ENCODE measurements at regions of chr12 and their contacts with region 1.

Region 1: DNA sequence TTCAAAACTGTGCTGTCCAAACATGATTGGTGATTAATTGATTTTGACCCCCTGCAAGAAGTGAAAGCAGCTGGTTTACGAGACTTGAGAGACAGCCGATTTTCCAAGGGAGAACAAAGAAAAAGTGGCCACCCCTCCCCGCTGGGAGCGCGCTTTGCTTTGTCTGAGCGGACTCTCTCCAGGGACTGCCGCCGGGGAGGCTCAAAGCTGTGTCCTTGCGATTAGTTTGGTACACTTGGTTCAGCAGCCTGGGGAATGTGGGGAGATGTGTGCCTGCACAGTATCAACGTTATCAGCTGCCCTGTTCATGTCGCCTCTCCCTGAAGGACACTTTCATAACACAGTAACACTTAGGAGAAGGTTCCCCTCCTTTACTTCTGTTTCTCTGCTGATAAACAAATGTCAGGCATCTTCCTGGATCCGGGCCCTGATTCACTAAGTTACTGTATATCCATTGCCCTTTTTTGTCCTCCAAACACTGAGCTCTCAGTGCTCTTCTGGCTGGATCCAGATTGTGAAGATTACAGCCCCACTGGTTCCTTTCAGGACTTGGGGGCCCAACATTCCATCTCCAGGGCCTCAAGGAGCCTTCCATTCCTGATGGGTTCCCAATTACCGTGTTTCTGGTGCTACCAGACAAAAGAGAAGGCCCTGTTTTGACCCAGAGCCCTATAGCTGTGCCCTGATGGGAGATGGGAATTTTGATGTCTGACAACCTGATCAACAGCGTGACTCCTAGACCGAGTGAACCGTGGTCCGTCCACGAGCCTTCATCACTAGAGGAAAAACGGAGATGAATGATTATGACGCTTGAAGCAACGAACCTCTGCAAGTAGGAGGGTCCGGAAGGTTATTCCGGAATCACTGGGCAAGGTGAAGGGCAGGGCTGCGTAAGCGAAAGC is 31.7 kb upstream of the TUBA1C start:
- DNase-seq: peak; percentile 71
- ATAC-seq: no peak
- H3K4me3 ChIP-seq: peak overlapping the region; percentile 19
- H3K27ac ChIP-seq: peak overlapping the region; percentile 95
- H3K4me1 ChIP-seq: peaks cover 21% of the 10 kb centered on the region
- H3K27me3 ChIP-seq: no peaks in the 10 kb centered on the region
- CTCF ChIP-seq: no peak

Region 2: GRCh38 chr12:49130151-49131050 is 102.8 kb before region 1 on chr12:
- intact Hi-C with region 1: loop called (anchors 10 kb)
- DNase-seq: peak; percentile 98
- ATAC-seq: peak; percentile 87
- H3K4me3 ChIP-seq: peak overlapping the region; percentile 100
- H3K27ac ChIP-seq: peak overlapping the region; percentile 100
- H3K4me1 ChIP-seq: peaks cover 22% of the 10 kb centered on the region
- H3K27me3 ChIP-seq: no peaks in the 10 kb centered on the region
- CTCF ChIP-seq: peak; percentile 92

Measured in upper lobe of right lung (tissue), 1 donor.